ENCODE measurements at regions of chr13 and their contacts with region 1.

Region 1: GRCh38 chr13:24160454-24161009 is at the start of gene SPATA13:
- DNase-seq: peak; percentile 90
- H3K4me3 ChIP-seq: peak within 1 kb of the TSS; percentile 64 to 77 (median 73)
- H3K27ac ChIP-seq: peak within 1 kb of the TSS; percentile 61
- H3K4me1 ChIP-seq: peaks cover 17% of the 10 kb centered on the region
- H3K27me3 ChIP-seq: no peaks in the 10 kb centered on the region
- CTCF ChIP-seq: no peak
- POLR2A ChIP-seq: peak; percentile 75
- total RNA-seq, gene SPATA13: 12.9 and 13.3 TPM in 2 replicates

Region 2: DNA sequence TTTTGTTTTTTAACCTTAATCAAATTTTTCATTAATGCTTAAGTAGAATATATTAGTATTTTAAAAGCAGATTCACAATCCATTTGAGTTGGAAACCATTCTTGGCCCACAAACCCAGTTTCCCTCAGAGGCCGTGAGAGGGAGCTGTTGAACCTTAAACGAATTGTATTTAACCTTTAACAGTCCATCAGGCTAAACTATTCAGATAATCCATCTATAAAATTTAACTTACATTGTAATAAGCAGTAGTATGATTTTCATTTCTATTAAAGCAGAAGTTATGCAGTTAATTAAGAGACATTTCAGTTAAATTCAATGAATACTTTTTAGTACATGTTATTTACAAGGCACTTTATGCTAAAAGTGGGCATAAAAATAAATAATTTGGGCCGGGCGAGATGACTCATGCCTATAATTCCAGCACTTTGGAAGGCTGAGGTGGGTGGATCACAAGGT is 140.1 kb before region 1 on chr13:
- CTCF ChIA-PET with region 1: interaction called, 17 read pairs
- POLR2A ChIA-PET with region 1: no interaction called
- dilution Hi-C with region 1: no loop called
- intact Hi-C with region 1: no loop called
- DNase-seq: peak; percentile 67
- H3K4me3 ChIP-seq: no peak overlapping the region
- H3K27ac ChIP-seq: no peak overlapping the region
- H3K4me1 ChIP-seq: no peaks in the 10 kb centered on the region
- H3K27me3 ChIP-seq: no peaks in the 10 kb centered on the region
- CTCF ChIP-seq: peak; percentile 62 to 74
- POLR2A ChIP-seq: no peak

Region 3: GRCh38 chr13:24074701-24075100 is 85.8 kb before region 1 on chr13:
- CTCF ChIA-PET with region 1: interaction called, 4 read pairs
- POLR2A ChIA-PET with region 1: no interaction called
- dilution Hi-C with region 1: no loop called
- intact Hi-C with region 1: loop called (anchors 5 kb)
- DNase-seq: peak; percentile 84
- H3K4me3 ChIP-seq: no peak overlapping the region
- H3K27ac ChIP-seq: peak overlapping the region; percentile 96
- H3K4me1 ChIP-seq: peaks cover 39% of the 10 kb centered on the region
- H3K27me3 ChIP-seq: no peaks in the 10 kb centered on the region
- CTCF ChIP-seq: no peak
- POLR2A ChIP-seq: peak; percentile 29

Region 4: DNA sequence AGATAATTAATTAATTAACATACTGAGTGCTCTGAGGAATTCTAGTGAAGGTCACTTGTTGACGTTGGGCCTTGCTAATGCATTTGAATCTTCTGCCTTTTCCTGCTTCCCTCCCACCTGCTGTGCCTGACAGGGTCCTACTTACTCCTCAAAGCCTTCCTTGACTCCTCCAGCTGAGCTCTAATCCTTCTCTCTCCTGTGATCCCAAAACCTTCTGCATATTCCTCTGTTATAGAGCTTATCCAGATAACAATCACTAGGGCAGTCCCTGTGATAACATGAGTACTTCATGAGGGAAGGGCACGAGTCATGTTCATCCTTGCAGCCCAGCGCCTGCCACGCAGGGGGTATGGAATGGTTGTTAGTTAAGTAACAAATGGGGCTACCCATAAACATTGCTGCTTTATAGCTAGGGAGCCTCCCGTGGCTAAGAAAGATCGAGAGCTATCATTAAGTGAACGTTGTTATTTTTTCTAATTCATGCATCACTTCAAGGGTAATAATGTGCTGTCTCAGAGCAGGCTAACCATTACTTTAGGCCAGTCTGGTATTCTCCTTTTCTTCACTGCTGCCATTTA is 19.1 kb before region 1 on chr13:
- CTCF ChIA-PET with region 1: interaction called, 5 read pairs
- POLR2A ChIA-PET with region 1: interaction called, 4 read pairs
- dilution Hi-C with region 1: no loop called
- intact Hi-C with region 1: loop called (anchors 2 kb)
- DNase-seq: no peak
- H3K4me3 ChIP-seq: no peak overlapping the region
- H3K27ac ChIP-seq: no peak overlapping the region
- H3K4me1 ChIP-seq: peaks cover 20% of the 10 kb centered on the region
- H3K27me3 ChIP-seq: no peaks in the 10 kb centered on the region
- CTCF ChIP-seq: no peak
- POLR2A ChIP-seq: no peak

Region 5: GRCh38 chr13:24148399-24149305 is 11.9 kb before region 1 on chr13:
- CTCF ChIA-PET with region 1: interaction called, 7 read pairs
- POLR2A ChIA-PET with region 1: interaction called, 4 read pairs
- dilution Hi-C with region 1: no loop called
- intact Hi-C with region 1: loop called (anchors 1 kb)
- DNase-seq: peak; percentile 94
- H3K4me3 ChIP-seq: no peak overlapping the region
- H3K27ac ChIP-seq: peak overlapping the region; percentile 91
- H3K4me1 ChIP-seq: peaks cover 19% of the 10 kb centered on the region
- H3K27me3 ChIP-seq: no peaks in the 10 kb centered on the region
- CTCF ChIP-seq: no peak
- POLR2A ChIP-seq: no peak

Region 6: GRCh38 chr13:24220086-24220703 is 59.7 kb after region 1 on chr13:
- CTCF ChIA-PET with region 1: interaction called, 7 read pairs
- POLR2A ChIA-PET with region 1: no interaction called
- dilution Hi-C with region 1: no loop called
- intact Hi-C with region 1: loop called (anchors 1 kb)
- DNase-seq: peak; percentile 77
- H3K4me3 ChIP-seq: no peak overlapping the region
- H3K27ac ChIP-seq: no peak overlapping the region
- H3K4me1 ChIP-seq: peaks cover 10% of the 10 kb centered on the region
- H3K27me3 ChIP-seq: no peaks in the 10 kb centered on the region
- CTCF ChIP-seq: peak; percentile 60 to 62
- POLR2A ChIP-seq: no peak

Region 7: DNA sequence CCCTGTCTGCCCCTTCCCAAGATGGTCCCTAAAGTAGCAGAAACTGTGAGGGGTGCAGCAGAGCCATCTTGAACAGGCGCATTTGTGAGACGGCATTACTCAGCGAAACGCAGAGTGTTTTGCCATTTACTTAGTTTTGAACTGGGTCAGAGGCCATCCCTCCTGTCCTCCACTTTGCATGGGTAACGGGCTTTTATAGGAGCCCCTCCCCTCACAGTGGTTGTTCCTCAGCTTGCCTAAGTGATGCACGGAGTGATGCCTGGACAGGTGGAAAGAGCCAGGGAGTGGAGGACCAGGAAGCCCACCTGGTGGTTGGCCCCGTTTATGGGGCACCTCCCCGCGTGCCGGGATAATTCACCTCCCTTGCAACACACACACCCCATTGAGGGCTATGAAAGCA is 80.8 kb after region 1 on chr13:
- CTCF ChIA-PET with region 1: no interaction called
- POLR2A ChIA-PET with region 1: no interaction called
- dilution Hi-C with region 1: no loop called
- intact Hi-C with region 1: no loop called
- DNase-seq: no peak
- H3K4me3 ChIP-seq: no peak overlapping the region
- H3K27ac ChIP-seq: no peak overlapping the region
- H3K4me1 ChIP-seq: no peaks in the 10 kb centered on the region
- H3K27me3 ChIP-seq: no peaks in the 10 kb centered on the region
- CTCF ChIP-seq: no peak
- POLR2A ChIP-seq: no peak

Measured in endothelial cell of umbilical vein (primary cell).